Endothelial cell of umbilical vein (primary cell): ENCODE measurements at regions of chr6 and their contacts with region 1.

Region 1: DNA sequence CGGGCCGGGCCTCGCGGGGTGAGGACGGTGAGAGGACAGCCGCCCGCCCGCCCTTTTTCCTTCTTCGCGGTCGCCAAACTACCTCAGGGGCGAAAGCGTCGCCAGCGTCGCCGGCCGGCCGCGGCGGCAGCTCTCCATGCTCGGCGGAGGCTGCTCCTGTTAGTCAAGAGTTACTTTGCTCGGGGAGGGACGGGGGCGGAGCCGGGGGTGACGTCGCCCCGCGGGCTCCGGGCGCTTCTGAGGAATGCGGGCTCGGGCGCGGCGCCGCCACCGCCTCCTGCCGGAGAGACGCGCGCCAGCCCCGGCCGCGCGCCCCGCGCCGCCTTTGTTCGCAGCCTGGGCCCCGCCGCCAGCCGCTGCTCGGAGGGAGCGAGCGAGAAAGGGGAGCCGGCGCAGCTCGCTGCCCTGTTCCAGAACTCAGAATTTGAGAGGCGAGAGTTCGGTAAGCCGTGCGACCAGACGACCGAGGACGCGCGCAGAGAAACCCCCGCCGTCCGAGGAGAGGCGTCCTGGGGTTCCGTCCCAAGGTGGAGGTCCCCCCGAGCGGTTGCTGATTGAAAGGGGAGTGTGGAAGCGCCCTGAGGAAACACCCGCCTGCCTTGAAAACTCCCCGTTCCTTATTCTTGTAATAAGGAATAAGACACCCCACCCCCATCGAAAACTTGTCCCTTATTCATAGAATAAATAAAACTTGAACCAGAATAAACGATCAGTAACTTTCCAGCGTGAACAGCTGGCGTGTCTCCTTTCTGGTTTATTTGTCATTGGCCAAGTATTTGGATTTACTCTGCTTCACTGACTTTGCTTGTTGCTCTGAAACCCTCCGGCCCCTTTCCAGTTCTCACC is at the start of gene PTPRK:
- DNase-seq: peak; percentile 94
- H3K4me3 ChIP-seq: peak within 1 kb of the TSS; percentile 87 to 99 (median 98)
- H3K27ac ChIP-seq: peak within 1 kb of the TSS; percentile 98
- H3K4me1 ChIP-seq: peaks cover 36% of the 10 kb centered on the region
- H3K27me3 ChIP-seq: no peaks in the 10 kb centered on the region
- CTCF ChIP-seq: peak; percentile 32 to 68
- POLR2A ChIP-seq: peak; percentile 89
- total RNA-seq, gene PTPRK: 74.0 and 88.3 TPM in 2 replicates

Region 2: GRCh38 chr6:127855542-127856159 is 665.0 kb before region 1 on chr6:
- CTCF ChIA-PET with region 1: interaction called, 62 read pairs
- POLR2A ChIA-PET with region 1: no interaction called
- dilution Hi-C with region 1: no loop called
- intact Hi-C with region 1: loop called (anchors 1 kb)
- DNase-seq: peak; percentile 61
- H3K4me3 ChIP-seq: no peak overlapping the region
- H3K27ac ChIP-seq: no peak overlapping the region
- H3K4me1 ChIP-seq: no peaks in the 10 kb centered on the region
- H3K27me3 ChIP-seq: no peaks in the 10 kb centered on the region
- CTCF ChIP-seq: peak; percentile 18 to 45
- POLR2A ChIP-seq: no peak

Region 3: DNA sequence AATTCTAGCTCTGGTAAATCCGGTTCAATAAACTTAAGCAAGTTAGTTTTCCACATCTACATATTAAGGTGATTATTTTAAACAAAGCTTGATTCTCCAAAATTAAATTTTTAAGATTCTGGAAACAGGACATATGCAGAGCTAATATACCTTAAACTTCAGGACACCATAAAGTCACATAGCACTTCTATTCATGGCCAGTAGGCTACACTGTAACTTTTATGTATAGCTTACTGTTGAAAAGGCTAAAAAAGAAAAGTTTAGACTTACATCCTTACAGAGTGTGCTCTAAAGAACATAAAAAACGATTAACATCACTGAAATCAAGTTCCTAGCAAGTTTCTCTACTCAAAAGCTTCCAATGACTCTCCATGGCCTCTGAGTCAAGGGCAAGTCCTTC is 225.0 kb before region 1 on chr6:
- CTCF ChIA-PET with region 1: interaction called, 5 read pairs
- POLR2A ChIA-PET with region 1: no interaction called
- dilution Hi-C with region 1: no loop called
- intact Hi-C with region 1: loop called (anchors 5 kb)
- DNase-seq: no peak
- H3K4me3 ChIP-seq: no peak overlapping the region
- H3K27ac ChIP-seq: no peak overlapping the region
- H3K4me1 ChIP-seq: no peaks in the 10 kb centered on the region
- H3K27me3 ChIP-seq: no peaks in the 10 kb centered on the region
- CTCF ChIP-seq: no peak
- POLR2A ChIP-seq: no peak

Region 4: DNA sequence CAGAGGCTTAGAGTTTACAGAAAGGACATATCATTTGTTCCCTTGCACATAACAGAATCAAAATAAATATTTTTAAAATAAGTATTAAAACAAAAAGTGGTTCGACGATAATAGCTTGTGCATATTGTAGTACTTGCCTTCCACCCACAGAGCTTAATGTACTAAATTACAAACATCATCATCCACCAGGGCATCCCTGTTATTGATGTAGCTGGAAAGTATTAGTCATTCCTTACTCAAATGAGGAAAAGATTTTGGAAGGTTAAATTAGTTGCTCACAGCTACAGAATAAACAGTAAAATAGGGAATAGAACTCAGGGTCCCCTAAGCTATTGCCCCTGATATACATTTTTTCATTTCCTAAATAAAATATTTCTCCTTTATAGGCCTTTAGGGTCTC is 150.6 kb before region 1 on chr6:
- CTCF ChIA-PET with region 1: interaction called, 12 read pairs
- POLR2A ChIA-PET with region 1: no interaction called
- dilution Hi-C with region 1: no loop called
- intact Hi-C with region 1: no loop called
- DNase-seq: peak; percentile 71
- H3K4me3 ChIP-seq: no peak overlapping the region
- H3K27ac ChIP-seq: no peak overlapping the region
- H3K4me1 ChIP-seq: peaks cover 42% of the 10 kb centered on the region
- H3K27me3 ChIP-seq: no peaks in the 10 kb centered on the region
- CTCF ChIP-seq: no peak
- POLR2A ChIP-seq: no peak

Region 5: GRCh38 chr6:128508588-128509296 is 11.9 kb before region 1 on chr6:
- CTCF ChIA-PET with region 1: interaction called, 26 read pairs
- POLR2A ChIA-PET with region 1: interaction called, 8 read pairs
- dilution Hi-C with region 1: no loop called
- intact Hi-C with region 1: loop called (anchors 1 kb)
- DNase-seq: peak; percentile 92
- H3K4me3 ChIP-seq: peak overlapping the region in 1 of 3 experiments; percentile 39
- H3K27ac ChIP-seq: peak overlapping the region; percentile 97
- H3K4me1 ChIP-seq: peaks cover 56% of the 10 kb centered on the region
- H3K27me3 ChIP-seq: no peaks in the 10 kb centered on the region
- CTCF ChIP-seq: no peak
- POLR2A ChIP-seq: peak; percentile 66

Region 6: GRCh38 chr6:128676456-128676855 is 155.8 kb after region 1 on chr6:
- CTCF ChIA-PET with region 1: no interaction called
- POLR2A ChIA-PET with region 1: no interaction called
- dilution Hi-C with region 1: no loop called
- intact Hi-C with region 1: no loop called
- DNase-seq: no peak
- H3K4me3 ChIP-seq: no peak overlapping the region
- H3K27ac ChIP-seq: no peak overlapping the region
- H3K4me1 ChIP-seq: no peaks in the 10 kb centered on the region
- H3K27me3 ChIP-seq: no peaks in the 10 kb centered on the region
- CTCF ChIP-seq: no peak
- POLR2A ChIP-seq: no peak

Region 7: GRCh38 chr6:128731249-128732165 is 210.8 kb after region 1 on chr6:
- CTCF ChIA-PET with region 1: interaction called, 20 read pairs
- POLR2A ChIA-PET with region 1: no interaction called
- dilution Hi-C with region 1: no loop called
- intact Hi-C with region 1: loop called (anchors 1 kb)
- DNase-seq: peak; percentile 69
- H3K4me3 ChIP-seq: no peak overlapping the region
- H3K27ac ChIP-seq: no peak overlapping the region
- H3K4me1 ChIP-seq: no peaks in the 10 kb centered on the region
- H3K27me3 ChIP-seq: peaks cover 0 to 5% of the 10 kb centered on the region in 2 experiments
- CTCF ChIP-seq: peak; percentile 51 to 68
- POLR2A ChIP-seq: no peak